B cell (primary cell): ENCODE measurements at regions of chr15 and their contacts with region 1.

Region 1: DNA sequence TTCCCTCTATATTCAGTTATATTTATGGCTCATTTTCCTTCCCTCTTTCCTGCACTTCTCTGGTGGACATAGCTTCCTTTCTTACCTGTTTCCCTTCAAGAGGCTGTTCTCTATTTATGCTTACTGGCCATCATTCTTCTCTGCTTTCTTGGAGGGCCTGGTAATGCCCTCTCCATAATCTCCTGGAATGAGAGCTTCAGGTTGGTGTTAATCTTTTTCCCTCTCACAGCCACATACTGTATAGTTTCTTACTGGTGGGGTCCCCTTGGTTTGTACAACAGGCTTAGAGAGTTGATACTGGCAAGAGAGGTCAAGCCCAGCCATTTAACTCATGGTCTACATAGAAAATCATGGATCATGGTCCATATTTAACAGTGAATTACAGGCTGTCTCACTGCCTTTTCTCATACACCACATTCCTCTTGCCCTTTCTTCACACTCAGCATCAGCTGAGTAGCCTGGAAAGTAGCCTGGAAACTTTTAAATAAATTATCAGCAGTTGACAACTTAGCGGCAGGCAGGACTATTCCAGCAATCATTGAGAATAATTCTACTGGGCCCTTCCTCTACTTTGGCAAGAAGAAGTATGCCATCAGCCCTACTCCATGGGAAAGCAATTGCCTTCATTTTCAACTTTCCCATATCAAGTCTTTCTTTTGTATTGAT is 38.0 kb upstream of the DPH6 start:
- DNase-seq: no peak
- ATAC-seq: no peak
- H3K4me3 ChIP-seq: no peak overlapping the region
- H3K4me3 Mint-ChIP-seq: no peak overlapping the region
- H3K27ac ChIP-seq: no peak overlapping the region
- H3K27ac Mint-ChIP-seq: no peak overlapping the region
- H3K4me1 ChIP-seq: no peaks in the 10 kb centered on the region
- H3K4me1 Mint-ChIP-seq: no peaks in the 10 kb centered on the region
- H3K27me3 ChIP-seq: no peaks in the 10 kb centered on the region
- H3K27me3 Mint-ChIP-seq: no peaks in the 10 kb centered on the region
- CTCF ChIP-seq: no peak

Region 2: DNA sequence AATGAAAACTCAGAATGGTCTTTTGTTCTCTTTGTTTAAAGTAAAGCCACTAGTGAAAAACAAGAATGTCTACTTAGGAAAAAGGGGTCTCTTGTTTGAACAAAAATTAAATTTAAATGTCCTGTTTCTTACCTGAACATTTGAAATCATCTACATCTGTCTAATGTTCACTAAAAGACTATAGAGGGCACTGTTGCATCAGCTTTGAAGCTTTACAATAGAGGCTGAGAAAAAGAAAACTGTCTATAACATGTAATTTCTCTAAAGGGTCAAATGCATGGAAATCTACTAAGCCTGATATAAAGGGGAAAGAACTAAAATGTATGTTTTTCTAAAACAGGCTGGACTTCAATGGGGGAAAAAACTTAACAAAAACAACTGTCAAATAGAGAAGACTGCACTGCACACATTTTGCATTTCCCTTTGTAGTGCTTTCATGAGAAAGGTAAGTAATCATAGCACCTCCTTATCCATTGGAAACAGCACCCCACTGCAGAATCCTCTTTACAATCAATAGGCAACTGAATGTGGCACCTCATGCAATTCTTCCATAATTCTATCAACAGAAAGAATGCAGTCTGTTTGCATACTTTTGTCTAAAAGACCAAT is 64.4 kb before region 1 on chr15:
- CTCF ChIA-PET with region 1: no interaction called
- POLR2A ChIA-PET with region 1: no interaction called
- intact Hi-C with region 1: loop called (anchors 10 kb)
- DNase-seq: peak; percentile 54
- ATAC-seq: no peak
- H3K4me3 ChIP-seq: no peak overlapping the region
- H3K4me3 Mint-ChIP-seq: no peak overlapping the region
- H3K27ac ChIP-seq: no peak overlapping the region
- H3K27ac Mint-ChIP-seq: no peak overlapping the region
- H3K4me1 ChIP-seq: no peaks in the 10 kb centered on the region
- H3K4me1 Mint-ChIP-seq: no peaks in the 10 kb centered on the region
- H3K27me3 ChIP-seq: no peaks in the 10 kb centered on the region
- H3K27me3 Mint-ChIP-seq: no peaks in the 10 kb centered on the region
- CTCF ChIP-seq: peak; percentile 79

Region 3: GRCh38 chr15:35603301-35603700 is 19.3 kb after region 1 on chr15:
- CTCF ChIA-PET with region 1: no interaction called
- POLR2A ChIA-PET with region 1: no interaction called
- intact Hi-C with region 1: no loop called
- DNase-seq: no peak
- ATAC-seq: no peak
- H3K4me3 ChIP-seq: no peak overlapping the region
- H3K4me3 Mint-ChIP-seq: no peak overlapping the region
- H3K27ac ChIP-seq: no peak overlapping the region
- H3K27ac Mint-ChIP-seq: no peak overlapping the region
- H3K4me1 ChIP-seq: no peaks in the 10 kb centered on the region
- H3K4me1 Mint-ChIP-seq: no peaks in the 10 kb centered on the region
- H3K27me3 ChIP-seq: no peaks in the 10 kb centered on the region
- H3K27me3 Mint-ChIP-seq: peaks cover 3% of the 10 kb centered on the region
- CTCF ChIP-seq: no peak

Region 4: GRCh38 chr15:35740761-35741160 is 156.8 kb after region 1 on chr15:
- CTCF ChIA-PET with region 1: no interaction called
- POLR2A ChIA-PET with region 1: no interaction called
- intact Hi-C with region 1: no loop called
- DNase-seq: no peak
- ATAC-seq: no peak
- H3K4me3 ChIP-seq: no peak overlapping the region
- H3K4me3 Mint-ChIP-seq: no peak overlapping the region
- H3K27ac ChIP-seq: no peak overlapping the region
- H3K27ac Mint-ChIP-seq: no peak overlapping the region
- H3K4me1 ChIP-seq: no peaks in the 10 kb centered on the region
- H3K4me1 Mint-ChIP-seq: no peaks in the 10 kb centered on the region
- H3K27me3 ChIP-seq: no peaks in the 10 kb centered on the region
- H3K27me3 Mint-ChIP-seq: peaks cover 6% of the 10 kb centered on the region
- CTCF ChIP-seq: no peak